PC-3 (cell line): ENCODE measurements at regions of chr2 and their contacts with region 1.

Region 1: GRCh38 chr2:241910604-241911520 is 41.3 kb downstream of the RTP5 start:
- DNase-seq: no peak
- ATAC-seq: no peak
- H3K4me3 ChIP-seq: no peak overlapping the region
- H3K27ac ChIP-seq: no peak overlapping the region
- H3K4me1 ChIP-seq: no peaks in the 10 kb centered on the region
- H3K27me3 ChIP-seq: no peaks in the 10 kb centered on the region
- CTCF ChIP-seq: no peak

Region 2: DNA sequence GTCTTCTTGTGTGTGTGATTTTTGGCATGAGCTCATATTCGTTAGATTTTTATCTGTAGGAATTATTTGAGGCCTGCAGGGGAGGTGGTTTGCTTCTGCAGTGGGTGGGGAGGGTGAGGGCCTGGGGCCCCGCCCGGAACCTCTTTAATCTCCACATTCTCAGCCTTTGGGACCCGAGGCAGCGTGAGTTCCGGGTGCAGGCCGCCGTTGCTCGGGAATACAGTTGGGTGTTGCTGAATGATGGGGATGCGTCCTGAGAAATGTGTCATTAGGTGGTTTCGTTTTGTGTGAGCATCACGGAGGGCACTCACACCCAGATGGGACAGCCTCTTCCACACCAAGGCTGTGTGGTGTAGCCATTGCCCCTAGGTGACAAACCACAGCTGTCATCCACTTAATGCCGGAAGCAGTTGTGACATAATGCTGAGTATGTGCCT is 147.9 kb before region 1 on chr2:
- CTCF ChIA-PET with region 1: no interaction called
- POLR2A ChIA-PET with region 1: no interaction called
- intact Hi-C with region 1: no loop called
- DNase-seq: peak; percentile 48
- ATAC-seq: peak; percentile 52
- H3K4me3 ChIP-seq: peak overlapping the region; percentile 41; the same call in 1 of the 2 replicates
- H3K27ac ChIP-seq: peak overlapping the region; percentile 82
- H3K4me1 ChIP-seq: peaks cover 13% of the 10 kb centered on the region
- H3K27me3 ChIP-seq: no peaks in the 10 kb centered on the region
- CTCF ChIP-seq: no peak

Region 3: GRCh38 chr2:241898463-241899270 is 12.2 kb before region 1 on chr2:
- CTCF ChIA-PET with region 1: no interaction called
- POLR2A ChIA-PET with region 1: no interaction called
- intact Hi-C with region 1: loop called (anchors 1 kb)
- DNase-seq: no peak
- ATAC-seq: no peak
- H3K4me3 ChIP-seq: no peak overlapping the region
- H3K27ac ChIP-seq: no peak overlapping the region
- H3K4me1 ChIP-seq: no peaks in the 10 kb centered on the region
- H3K27me3 ChIP-seq: no peaks in the 10 kb centered on the region
- CTCF ChIP-seq: no peak